Prostate gland (tissue), 2 donors: ENCODE measurements at regions of chr14 and their contacts with region 1.

Region 1: DNA sequence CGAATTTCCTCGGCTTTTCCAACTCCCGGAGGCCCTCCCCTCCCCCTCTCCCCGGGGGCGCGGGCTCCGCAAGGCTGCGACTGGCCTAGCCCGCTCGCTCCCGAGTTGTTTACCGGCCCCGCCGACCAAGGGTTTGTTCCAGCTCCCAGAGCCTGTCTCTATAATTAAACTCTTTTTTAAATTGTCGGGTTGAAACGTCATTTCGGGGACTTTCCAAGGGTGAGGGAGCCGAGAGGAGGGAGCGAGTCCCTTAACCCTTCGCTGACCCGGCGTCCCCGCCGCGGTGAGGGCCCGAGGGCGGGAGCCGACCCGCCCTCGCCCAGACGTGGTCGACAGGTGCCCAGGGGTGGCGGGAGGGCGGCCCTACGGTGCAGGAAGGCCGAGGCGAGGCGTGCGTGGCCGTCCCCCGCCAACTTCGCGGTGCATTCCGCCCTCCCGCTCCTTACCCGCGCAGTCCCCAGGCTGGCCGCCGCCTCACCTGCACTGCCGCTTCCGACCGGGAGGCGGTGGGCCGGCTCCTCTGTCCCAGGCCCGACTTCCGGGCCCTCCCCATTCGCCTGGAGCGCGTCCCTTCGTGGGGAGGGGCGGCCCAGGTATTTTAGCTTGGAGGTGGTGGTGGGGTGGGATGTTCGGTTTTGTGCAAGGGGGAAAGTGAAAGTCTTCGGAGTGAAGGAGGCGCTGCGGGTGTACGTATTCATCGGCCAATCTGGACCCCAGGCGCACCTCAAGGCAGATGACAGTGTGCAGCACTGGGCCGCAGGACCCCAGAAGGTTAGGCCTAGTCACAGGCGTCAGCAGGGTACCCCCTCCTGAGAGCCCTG is 2.9 kb upstream of the ZFP36L1 start:
- DNase-seq: peak; percentile 78
- H3K4me3 ChIP-seq: peak overlapping the region; percentile 86 to 94
- H3K27ac ChIP-seq: peak overlapping the region; percentile 99 to 100
- H3K4me1 ChIP-seq: no peaks in the 10 kb centered on the region
- H3K27me3 ChIP-seq: no peaks in the 10 kb centered on the region
- CTCF ChIP-seq: peak; percentile 76 to 98 (median 90)
- POLR2A ChIP-seq: peak; percentile 77

Region 2: GRCh38 chr14:68526420-68527105 is 269.2 kb before region 1 on chr14:
- intact Hi-C with region 1: loop called (anchors 5 kb)
- DNase-seq: peak; percentile 59
- H3K4me3 ChIP-seq: no peak overlapping the region
- H3K27ac ChIP-seq: peak overlapping the region; percentile 79
- H3K4me1 ChIP-seq: peaks cover 1% of the 10 kb centered on the region
- H3K27me3 ChIP-seq: no peaks in the 10 kb centered on the region
- CTCF ChIP-seq: no peak
- POLR2A ChIP-seq: no peak

Region 3: DNA sequence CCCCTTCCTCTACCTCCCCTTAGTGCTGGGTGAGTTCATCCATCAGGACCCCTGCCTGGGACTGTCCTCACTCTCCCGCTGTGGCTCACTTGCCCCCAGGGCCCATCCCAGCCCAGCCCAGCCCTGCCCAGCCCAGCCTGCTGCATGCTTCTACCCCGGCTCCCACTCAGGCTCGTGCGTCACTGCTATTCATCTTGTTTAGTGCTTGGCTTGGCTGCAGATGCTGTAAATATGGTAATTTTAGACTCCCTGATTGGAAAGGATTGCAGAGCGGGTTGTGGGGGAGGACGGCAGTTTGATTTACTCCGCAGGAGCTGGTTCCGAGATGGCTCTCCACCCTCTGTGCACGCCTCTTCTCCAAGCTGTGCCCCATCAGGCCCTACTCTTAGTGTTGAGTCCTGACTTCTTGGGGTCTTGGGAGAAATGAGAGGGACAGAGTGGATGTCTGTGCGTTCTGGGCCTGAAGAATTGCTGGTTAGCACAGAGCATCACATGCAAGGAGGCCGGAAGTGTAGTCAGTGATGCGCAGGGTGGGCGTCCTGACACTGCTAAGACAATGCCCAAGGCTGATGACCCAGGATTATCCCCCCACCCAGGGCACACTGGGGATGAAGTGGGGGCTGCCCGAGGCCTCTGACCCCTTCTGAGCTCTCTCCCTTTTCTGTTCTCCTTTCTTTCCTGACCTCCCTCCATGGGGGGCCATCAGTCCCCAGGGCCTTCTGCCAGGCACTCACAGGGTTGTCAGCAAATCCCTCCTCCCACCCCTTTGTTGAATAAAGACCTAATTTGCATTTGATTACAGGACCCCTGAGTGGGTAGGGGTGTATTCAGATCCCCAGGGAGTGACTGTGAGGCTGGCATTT is 247.4 kb before region 1 on chr14:
- intact Hi-C with region 1: loop called (anchors 5 kb)
- DNase-seq: peak; percentile 84
- H3K4me3 ChIP-seq: no peak overlapping the region
- H3K27ac ChIP-seq: peak overlapping the region; percentile 81 to 84
- H3K4me1 ChIP-seq: peaks cover 39% of the 10 kb centered on the region
- H3K27me3 ChIP-seq: no peaks in the 10 kb centered on the region
- CTCF ChIP-seq: no peak
- POLR2A ChIP-seq: peak; percentile 59